PC-9 (cell line): ENCODE measurements at regions of chr19 and their contacts with region 1.

Region 1: GRCh38 chr19:16737911-16738310 is 18.3 kb downstream of the NWD1 start:
- DNase-seq: no peak
- H3K4me3 ChIP-seq: no peak overlapping the region
- H3K27ac ChIP-seq: no peak overlapping the region
- H3K4me1 ChIP-seq: no peaks in the 10 kb centered on the region
- H3K27me3 ChIP-seq: no peaks in the 10 kb centered on the region
- CTCF ChIP-seq: no peak

Region 2: DNA sequence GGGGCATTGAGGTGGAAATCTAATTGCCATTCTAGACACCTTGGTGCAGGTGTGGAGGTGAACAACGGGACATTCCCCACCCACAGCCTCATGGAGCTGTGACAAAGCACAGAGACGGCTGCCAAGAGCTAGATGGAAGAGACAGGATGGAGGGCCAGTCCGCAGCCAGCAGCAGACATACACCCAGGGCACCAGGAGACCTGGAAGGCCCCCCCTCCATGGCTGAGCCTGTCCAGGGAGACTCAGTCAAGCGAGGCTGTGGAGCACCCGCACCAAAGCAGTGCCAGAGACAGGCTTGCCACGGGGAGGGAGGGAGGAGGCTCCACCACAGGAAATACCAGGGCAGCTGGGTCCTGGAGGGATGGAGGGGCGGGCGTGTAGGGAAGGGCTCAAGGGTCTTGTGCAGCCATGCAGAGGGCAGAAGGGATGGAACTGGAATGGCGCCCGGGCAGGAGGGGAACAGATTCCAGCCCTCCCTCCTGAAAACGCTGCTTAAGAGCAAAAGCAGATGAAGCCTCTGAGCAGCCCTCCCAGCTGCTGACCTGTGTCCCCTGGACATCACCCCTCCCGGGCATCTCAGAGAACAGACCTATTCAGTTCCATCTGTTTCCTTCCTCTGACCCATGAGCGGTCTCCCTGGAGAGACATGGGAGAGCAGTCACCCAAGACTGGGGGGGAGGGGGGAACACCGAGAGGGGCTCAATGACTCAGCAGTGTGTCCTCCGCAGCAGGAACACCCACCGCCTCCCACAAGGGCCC is 280.5 kb before region 1 on chr19:
- CTCF ChIA-PET with region 1: no interaction called
- POLR2A ChIA-PET with region 1: interaction called, 37 read pairs
- intact Hi-C with region 1: no loop called
- DNase-seq: peak in 1 of 2 experiments; percentile 42
- H3K4me3 ChIP-seq: no peak overlapping the region
- H3K27ac ChIP-seq: no peak overlapping the region
- H3K4me1 ChIP-seq: peaks cover 11% of the 10 kb centered on the region
- H3K27me3 ChIP-seq: no peaks in the 10 kb centered on the region
- CTCF ChIP-seq: no peak

Region 3: DNA sequence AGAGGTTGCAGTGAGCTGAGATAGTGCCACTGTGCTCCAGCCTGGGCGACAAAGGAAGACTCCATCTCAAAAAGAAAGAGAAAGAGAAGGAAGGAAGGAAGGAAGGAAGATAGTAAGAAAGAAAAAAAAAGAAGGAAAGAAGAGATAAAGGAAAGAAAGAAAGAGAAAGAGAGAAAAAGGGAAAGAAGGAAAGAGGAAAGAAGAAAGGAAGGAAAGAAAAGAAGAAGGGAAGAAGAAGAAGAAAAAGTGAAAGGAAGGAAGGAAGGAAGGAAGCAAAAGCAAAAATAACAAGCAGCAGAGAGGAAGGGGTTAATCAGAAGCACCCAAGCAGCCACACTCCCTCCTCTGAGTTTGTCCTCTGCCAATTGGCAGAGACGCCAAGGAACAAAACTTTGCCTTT is 13.8 kb after region 1 on chr19:
- CTCF ChIA-PET with region 1: interaction called, 11 read pairs
- POLR2A ChIA-PET with region 1: no interaction called
- intact Hi-C with region 1: no loop called
- DNase-seq: no peak
- H3K4me3 ChIP-seq: no peak overlapping the region
- H3K27ac ChIP-seq: no peak overlapping the region
- H3K4me1 ChIP-seq: no peaks in the 10 kb centered on the region
- H3K27me3 ChIP-seq: no peaks in the 10 kb centered on the region
- CTCF ChIP-seq: no peak